ENCODE measurements at regions of chr17 and their contacts with region 1.

Region 1: GRCh38 chr17:69501591-69502468 is 87.3 kb downstream of the MAP2K6 start:
- DNase-seq: peak in 5 of 10 donors; percentile 16 to 64 (median 46)
- H3K4me3 ChIP-seq: peak overlapping the region in 58 of 59 donors; percentile 16 to 65 (median 43)
- H3K27ac ChIP-seq: peak overlapping the region in 58 of 59 donors; percentile 18 to 90 (median 78)
- H3K27me3 ChIP-seq: no peaks in the 10 kb centered on the region
- CTCF ChIP-seq: peak in 5 of 56 donors; percentile 5 to 16 (median 6)

Region 2: GRCh38 chr17:69414408-69415274 is 87.2 kb before region 1 on chr17 and contains the start of gene MAP2K6:
- intact Hi-C with region 1: loop called in 1 of 2 experiments (anchors 10 kb)
- DNase-seq: peak; percentile 79 to 91 (median 88)
- H3K4me3 ChIP-seq: peak within 1 kb of the TSS; percentile 48 to 86 (median 72)
- H3K27ac ChIP-seq: peak within 1 kb of the TSS in 37 of 59 donors; percentile 2 to 78 (median 55)
- H3K27me3 ChIP-seq: peaks cover 0 to 2% (median 0%) of the 10 kb centered on the region in 45 donors
- CTCF ChIP-seq: peak in 14 of 56 donors; percentile 6 to 39 (median 14)
- total RNA-seq, gene MAP2K6: 9.1 to 26.7 (median 17.7) TPM

Region 3: GRCh38 chr17:69523244-69523861 is 21.5 kb after region 1 on chr17:
- intact Hi-C with region 1: no loop called
- DNase-seq: peak in 2 of 10 donors; percentile 42 to 48
- H3K4me3 ChIP-seq: peak overlapping the region in 21 of 59 donors; percentile 7 to 49 (median 24)
- H3K27ac ChIP-seq: peak overlapping the region in 27 of 59 donors; percentile 0 to 78 (median 36)
- H3K27me3 ChIP-seq: no peaks in the 10 kb centered on the region
- CTCF ChIP-seq: peak; percentile 65 to 92 (median 81)

Measured in dorsolateral prefrontal cortex (tissue), 120 donors.